Sigmoid colon (tissue), 7 donors: ENCODE measurements at regions of chr15 and their contacts with region 1.

Region 1: DNA sequence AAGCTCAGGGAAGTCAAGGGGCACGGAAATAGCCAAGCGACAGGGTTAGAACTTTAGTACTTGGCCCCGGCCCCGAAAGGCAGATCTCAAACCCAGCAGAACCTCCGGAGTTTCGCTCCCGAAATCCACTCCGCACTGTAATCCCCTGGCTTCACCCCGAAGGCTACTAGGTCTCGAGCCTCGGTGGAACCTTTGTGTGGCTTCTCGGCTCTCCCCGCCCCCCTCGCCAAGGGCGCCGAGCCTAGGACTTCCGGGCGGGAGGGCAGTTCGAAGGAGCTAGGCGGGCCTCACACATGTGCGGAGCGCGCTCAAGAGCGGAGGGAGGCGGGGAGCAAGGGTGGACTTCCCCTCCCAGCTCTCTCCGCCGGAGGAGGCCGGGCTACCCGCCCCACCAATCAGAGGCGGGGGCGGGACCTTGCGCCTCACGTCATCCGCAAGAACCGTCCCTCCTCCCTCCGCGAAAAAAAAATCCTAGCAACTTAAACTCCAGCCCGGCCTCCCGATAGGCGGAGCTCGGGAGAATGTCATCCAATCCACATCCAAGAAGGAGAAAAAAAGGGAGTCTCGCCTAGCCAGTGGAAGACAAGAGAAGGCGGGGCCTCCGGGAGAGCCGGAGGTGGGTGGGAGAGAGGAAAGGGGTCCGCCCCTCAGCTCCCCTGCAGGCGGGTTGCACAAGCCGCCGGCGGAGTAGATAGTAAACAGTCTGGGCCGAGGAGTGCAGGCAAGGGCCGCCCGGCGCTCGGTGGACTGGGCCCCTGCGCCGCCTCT is 2.4 kb upstream of the SIN3A start:
- DNase-seq: peak; percentile 99
- H3K4me3 ChIP-seq: peak overlapping the region; percentile 75 to 90 (median 84)
- H3K27ac ChIP-seq: peak overlapping the region; percentile 98 to 100 (median 100)
- H3K4me1 ChIP-seq: peaks cover 0 to 41% (median 28%) of the 10 kb centered on the region in 4 donors
- H3K27me3 ChIP-seq: no peaks in the 10 kb centered on the region
- CTCF ChIP-seq: no peak
- EP300 ChIP-seq: no peak
- POLR2A ChIP-seq: peak; percentile 77 to 85

Region 2: DNA sequence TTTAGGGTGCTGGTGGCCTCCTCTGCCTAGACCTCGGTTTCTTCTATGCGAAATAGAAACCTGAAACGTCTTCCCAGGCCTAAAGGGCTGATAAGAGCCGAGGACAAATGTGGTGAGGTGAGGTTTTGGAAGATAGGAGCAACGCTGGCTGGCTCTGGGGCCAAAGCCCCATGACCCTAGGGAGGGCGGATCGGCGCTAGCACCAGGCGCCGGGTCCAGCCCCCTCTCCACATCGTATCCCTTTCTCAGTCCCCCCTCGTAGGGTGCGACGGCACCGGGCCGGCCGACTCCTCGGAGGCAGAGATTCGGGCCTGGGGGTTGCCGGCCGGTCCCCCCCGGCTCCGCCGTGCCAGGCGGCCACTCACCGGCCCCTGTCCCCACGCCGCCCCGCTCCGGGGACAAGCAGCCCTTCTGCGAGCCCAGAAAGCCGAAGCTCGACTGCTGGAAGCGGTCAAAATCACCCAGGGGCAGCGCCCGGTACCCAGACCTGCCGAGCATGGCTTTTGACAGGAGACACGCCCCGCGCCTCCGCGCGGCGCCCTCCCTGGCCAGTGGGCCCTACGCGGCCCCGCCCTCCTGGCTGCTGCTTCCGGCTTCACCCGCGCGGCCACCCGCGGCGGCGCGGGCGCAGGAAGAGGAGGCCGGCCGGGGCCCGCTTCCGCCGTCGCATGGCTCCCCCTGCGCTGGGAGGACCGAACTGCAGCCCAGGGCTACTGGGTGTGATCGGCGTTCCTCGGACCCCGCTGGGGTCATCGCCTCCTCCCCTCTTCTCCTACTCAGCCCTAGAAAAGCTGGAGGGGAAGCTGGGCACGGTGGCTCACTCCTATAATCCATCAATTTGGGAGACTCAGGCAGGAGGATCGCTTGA is 1461.9 kb before region 1 on chr15 and contains the start of gene STOML1:
- intact Hi-C with region 1: loop called (anchors 10 kb)
- DNase-seq: peak; percentile 94
- H3K4me3 ChIP-seq: peak within 1 kb of the TSS; percentile 73 to 91 (median 79)
- H3K27ac ChIP-seq: peak within 1 kb of the TSS; percentile 84 to 95 (median 88)
- H3K4me1 ChIP-seq: peaks cover 0 to 82% (median 73%) of the 10 kb centered on the region in 4 donors
- H3K27me3 ChIP-seq: no peaks in the 10 kb centered on the region
- CTCF ChIP-seq: peak; percentile 61 to 94 (median 74)
- EP300 ChIP-seq: no peak
- POLR2A ChIP-seq: peak in 1 of 2 donors; percentile 31
- total RNA-seq, gene STOML1: 10.0 to 17.8 (median 13.8) TPM

Region 3: DNA sequence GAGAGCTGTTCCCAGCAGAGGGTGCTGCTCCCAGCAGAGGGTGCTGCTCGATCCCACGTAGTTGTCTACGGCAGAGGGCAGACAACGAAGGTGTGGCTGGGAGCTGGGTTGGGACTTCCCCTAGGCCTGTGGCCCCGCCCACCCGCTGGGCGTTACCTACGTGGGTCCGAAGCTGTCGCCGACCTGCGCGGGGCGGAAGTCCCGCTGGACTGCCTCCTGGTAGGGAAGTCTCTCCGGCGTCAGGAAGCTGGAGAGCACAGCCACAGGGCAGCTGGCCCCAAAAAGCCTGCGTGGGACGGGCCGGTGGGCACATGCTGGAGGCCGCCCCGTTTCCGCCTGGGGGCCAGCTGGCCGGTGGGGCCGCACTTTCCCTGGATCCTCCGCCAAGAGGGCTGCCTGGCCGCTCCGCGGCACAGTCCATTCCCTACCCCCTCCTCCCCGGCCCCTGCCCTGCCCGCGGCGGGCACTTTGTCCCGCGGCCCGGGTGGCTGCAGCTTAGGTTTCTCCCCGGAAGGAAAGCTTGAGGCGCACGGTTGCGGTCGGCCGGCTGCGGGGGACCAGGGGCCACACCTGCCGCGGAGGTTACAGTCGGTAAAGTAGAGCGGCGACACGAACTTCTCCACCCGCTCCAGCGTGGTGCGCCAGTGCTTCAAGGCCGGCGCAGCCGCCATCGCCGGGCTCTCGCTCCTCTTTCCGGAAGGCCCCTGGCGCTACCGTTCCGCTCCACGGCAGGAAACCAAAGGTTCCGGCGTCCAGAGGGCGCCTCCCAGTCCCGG is 85.8 kb before region 1 on chr15 and contains the start of gene MAN2C1:
- intact Hi-C with region 1: loop called (anchors 1 kb)
- DNase-seq: peak; percentile 98
- H3K4me3 ChIP-seq: peak within 1 kb of the TSS; percentile 73 to 99 (median 82)
- H3K27ac ChIP-seq: peak within 1 kb of the TSS; percentile 95 to 99 (median 97)
- H3K4me1 ChIP-seq: peaks cover 0 to 22% (median 18%) of the 10 kb centered on the region in 4 donors
- H3K27me3 ChIP-seq: no peaks in the 10 kb centered on the region
- CTCF ChIP-seq: peak in 2 of 4 experiments; percentile 65 to 80
- EP300 ChIP-seq: peak in 1 of 4 donors; percentile 20
- POLR2A ChIP-seq: peak; percentile 70 to 71
- total RNA-seq, gene MAN2C1: 94.2 to 221 (median 132) TPM

Region 4: DNA sequence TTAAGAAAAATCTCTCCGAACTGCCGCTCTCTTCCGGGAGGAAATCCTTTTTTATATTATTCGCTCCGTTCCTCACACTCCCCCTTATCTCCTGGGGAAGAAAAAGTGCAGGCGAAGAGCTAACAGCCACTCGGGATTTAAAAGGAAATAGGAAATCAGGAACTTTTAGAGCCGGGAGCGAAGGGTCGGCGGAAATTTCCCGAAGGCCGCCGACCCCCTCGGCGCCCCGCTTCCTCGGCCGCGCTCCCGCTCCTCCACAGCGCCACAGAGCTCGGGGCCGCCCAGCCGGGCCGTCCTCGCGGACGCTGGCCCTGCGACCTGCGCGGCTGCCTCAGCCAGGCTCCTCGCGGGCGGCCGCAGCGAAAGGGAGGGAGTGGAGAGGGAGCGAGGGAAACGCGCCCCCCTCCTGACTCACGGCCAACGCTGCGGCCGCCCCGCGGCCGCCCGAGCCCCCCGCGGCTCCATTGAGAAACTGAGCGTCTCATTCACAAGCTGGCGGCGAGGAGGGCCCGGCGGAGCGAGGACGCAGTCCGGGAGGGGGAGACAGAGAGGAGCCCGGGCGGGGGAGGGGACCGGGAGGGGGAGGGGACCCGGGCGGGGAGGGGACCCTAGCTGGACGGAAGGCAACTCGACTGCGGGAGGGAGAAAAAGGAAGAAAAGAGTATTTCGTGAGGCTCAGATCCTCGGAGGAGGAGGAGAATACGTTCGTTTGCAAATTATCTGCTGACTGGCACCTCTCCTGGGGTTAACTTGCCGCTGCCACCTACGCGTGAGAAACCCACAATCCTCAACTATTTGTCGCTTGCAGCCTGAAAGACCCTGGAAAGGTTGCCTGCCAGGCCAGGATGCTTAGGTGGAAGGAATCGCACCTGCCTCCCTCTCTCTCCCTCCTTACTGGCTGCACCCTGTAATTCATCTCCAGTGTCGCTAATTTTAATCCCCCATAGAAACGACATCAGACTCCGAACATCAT is 125.3 kb after region 1 on chr15 and contains the start of gene PTPN9:
- intact Hi-C with region 1: loop called (anchors 5 kb)
- DNase-seq: peak; percentile 88
- H3K4me3 ChIP-seq: peak within 1 kb of the TSS; percentile 59 to 99 (median 94)
- H3K27ac ChIP-seq: peak within 1 kb of the TSS; percentile 89 to 92 (median 92)
- H3K4me1 ChIP-seq: peaks cover 0 to 29% (median 23%) of the 10 kb centered on the region in 4 donors
- H3K27me3 ChIP-seq: no peaks in the 10 kb centered on the region
- CTCF ChIP-seq: peak in 2 of 4 experiments; percentile 16 to 64
- EP300 ChIP-seq: no peak
- POLR2A ChIP-seq: peak in 1 of 2 donors; percentile 13
- total RNA-seq, gene PTPN9: 12.2 to 21.0 (median 17.2) TPM

Region 5: GRCh38 chr15:75639709-75640482 is 186.0 kb after region 1 on chr15 and contains the start of gene IMP3:
- intact Hi-C with region 1: loop called (anchors 5 kb)
- DNase-seq: peak; percentile 98
- H3K4me3 ChIP-seq: peak within 1 kb of the TSS; percentile 76 to 84 (median 81)
- H3K27ac ChIP-seq: peak within 1 kb of the TSS; percentile 88 to 93 (median 92)
- H3K4me1 ChIP-seq: peaks cover 0 to 41% (median 29%) of the 10 kb centered on the region in 4 donors
- H3K27me3 ChIP-seq: no peaks in the 10 kb centered on the region
- CTCF ChIP-seq: no peak
- EP300 ChIP-seq: peak in 1 of 4 donors; percentile 27
- POLR2A ChIP-seq: peak; percentile 93 to 97
- total RNA-seq, gene IMP3: 55.4 to 117 (median 84.3) TPM